Activated CD8-positive, alpha-beta memory T cell treated with anti-CD3 and anti-CD28 coated beads, Interleukin-2, amount 10 ng/mL, durations not matched to agents 7 days and 5 days (primary cell): ENCODE measurements at regions of chr22 and their contacts with region 1.

Region 1: DNA sequence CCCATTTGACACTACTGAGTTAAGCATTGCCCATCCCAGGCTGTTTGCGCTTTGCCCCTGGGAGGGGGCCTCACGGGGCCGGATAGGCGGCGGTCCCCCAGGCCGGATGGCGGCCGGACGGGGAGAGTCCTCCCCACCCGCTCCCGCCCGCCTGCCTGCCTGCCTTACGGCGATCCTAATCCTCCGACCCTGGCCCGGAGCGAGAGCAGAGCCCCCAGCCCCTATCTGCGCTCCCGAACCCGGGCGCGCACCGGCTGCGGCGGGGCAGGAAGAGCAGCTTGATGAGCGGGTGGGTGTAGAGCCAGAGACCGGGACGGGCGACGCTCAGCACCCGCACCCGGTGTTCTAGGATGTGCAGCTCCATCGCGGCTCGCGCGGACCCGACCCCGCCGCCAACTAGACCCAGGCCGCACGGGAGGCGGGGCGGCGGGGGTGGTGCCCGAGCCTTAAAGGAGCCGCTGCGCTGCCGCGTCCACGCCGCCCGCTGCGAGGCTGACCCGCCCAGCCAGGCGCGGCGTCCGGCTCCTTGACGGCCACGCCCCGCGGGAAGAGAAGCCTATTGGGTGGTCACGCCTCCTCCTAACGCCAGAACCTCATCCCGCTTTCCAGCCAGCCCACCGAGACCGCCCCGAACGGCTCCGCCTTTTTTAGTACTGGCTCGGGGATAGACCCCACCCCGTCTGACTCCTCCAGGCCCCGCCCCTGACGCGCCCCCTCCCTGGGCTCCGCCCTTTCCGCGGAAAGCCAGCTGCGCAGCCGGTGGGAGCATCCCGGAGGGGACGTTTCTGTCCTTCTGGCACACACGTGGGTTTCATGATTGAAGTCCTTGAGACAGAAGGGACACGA is at the start of gene CASTOR1:
- DNase-seq: peak; percentile 96
- ATAC-seq: peak; percentile 86
- H3K4me3 Mint-ChIP-seq: peak within 1 kb of the TSS; percentile 74
- H3K27ac Mint-ChIP-seq: peak within 1 kb of the TSS; percentile 83
- H3K4me1 Mint-ChIP-seq: peaks cover 51% of the 10 kb centered on the region
- H3K27me3 Mint-ChIP-seq: no peaks in the 10 kb centered on the region
- total RNA-seq, gene CASTOR1: 8.7 to 10.2 TPM

Region 2: DNA sequence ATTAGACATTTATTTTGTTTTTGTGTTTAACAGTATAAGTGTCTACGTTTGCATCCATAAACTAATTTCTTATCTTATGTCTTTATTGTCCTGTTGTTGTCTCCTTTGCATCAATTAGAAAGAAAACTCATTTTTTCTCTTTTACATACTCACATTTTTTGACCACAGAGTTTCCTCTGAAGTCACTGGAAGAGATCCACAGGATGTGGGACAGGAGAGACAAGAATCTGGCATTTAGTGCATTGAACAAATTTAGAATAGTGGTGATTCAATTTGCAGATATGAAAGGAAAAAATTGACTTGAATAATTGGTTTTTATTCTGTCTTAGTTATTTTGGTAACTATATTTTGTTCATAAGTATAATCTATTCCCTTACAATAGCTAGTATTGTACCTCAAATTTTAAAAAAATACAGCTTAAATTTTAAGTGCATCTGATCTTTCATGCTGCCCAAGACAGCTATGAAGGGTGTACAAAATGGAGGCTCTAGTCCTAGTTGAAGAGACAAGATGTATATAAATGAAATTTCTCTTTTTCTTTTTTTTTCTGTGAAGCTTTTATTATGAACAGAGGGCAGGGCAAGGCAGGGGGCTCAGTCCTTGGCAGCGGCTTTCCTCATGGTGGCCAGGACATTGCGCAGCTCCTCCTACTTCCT is 184.7 kb before region 1 on chr22:
- CTCF ChIA-PET with region 1: interaction called, 119 read pairs
- DNase-seq: peak; percentile 49
- ATAC-seq: peak; percentile 80
- H3K4me3 Mint-ChIP-seq: peak overlapping the region; percentile 24
- H3K27ac Mint-ChIP-seq: peak overlapping the region; percentile 78
- H3K4me1 Mint-ChIP-seq: peaks cover 55% of the 10 kb centered on the region
- H3K27me3 Mint-ChIP-seq: peaks cover 2% of the 10 kb centered on the region

Region 3: GRCh38 chr22:30277547-30278344 is 11.6 kb before region 1 on chr22:
- CTCF ChIA-PET with region 1: interaction called, 11 read pairs
- DNase-seq: no peak
- ATAC-seq: no peak
- H3K4me3 Mint-ChIP-seq: no peak overlapping the region
- H3K27ac Mint-ChIP-seq: no peak overlapping the region
- H3K4me1 Mint-ChIP-seq: peaks cover 70% of the 10 kb centered on the region
- H3K27me3 Mint-ChIP-seq: no peaks in the 10 kb centered on the region

Region 4: DNA sequence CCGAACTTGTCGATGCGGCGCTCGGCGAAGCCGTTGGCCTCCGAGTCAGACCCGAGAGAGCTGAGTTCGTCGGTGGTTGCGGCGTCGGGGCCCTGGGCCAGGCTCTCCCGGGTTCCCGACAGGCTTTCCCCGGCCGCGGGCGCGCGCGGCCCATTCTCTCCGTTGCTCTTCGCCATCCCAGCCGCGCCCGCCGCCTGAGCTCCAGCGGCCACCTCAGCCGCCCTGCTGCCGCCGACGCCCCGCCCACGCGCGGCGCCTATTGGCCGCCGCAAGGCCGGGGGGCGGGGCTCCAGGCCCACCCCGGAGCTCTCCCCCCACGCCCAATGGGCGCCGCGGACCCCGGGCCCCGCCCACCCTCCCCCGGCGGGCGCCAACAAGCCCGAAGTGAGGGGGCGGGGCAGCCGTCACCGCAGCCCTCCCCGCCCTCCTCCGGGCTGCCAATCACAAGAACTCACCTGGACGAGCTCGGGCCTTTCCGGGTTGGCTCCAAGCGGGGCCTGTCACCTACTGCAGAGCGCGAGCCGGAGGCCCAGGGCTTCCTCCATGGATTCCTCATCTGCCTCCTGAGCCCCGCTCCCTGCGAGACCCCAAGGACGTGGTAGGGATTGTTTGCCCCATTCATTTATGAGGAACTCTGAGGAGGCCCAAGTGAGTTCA is 37.5 kb after region 1 on chr22 and contains the start of gene TBC1D10A:
- CTCF ChIA-PET with region 1: interaction called, 81 read pairs
- DNase-seq: peak; percentile 95
- ATAC-seq: peak; percentile 90
- H3K4me3 Mint-ChIP-seq: peak within 1 kb of the TSS; percentile 88
- H3K27ac Mint-ChIP-seq: peak within 1 kb of the TSS; percentile 80
- H3K4me1 Mint-ChIP-seq: peaks cover 42% of the 10 kb centered on the region
- H3K27me3 Mint-ChIP-seq: no peaks in the 10 kb centered on the region
- total RNA-seq, gene TBC1D10A: 32.2 to 48.1 TPM

Region 5: GRCh38 chr22:30373331-30374325 is 84.3 kb after region 1 on chr22:
- CTCF ChIA-PET with region 1: interaction called, 12 read pairs
- DNase-seq: no peak
- ATAC-seq: no peak
- H3K4me3 Mint-ChIP-seq: no peak overlapping the region
- H3K27ac Mint-ChIP-seq: no peak overlapping the region
- H3K4me1 Mint-ChIP-seq: no peaks in the 10 kb centered on the region
- H3K27me3 Mint-ChIP-seq: no peaks in the 10 kb centered on the region

Region 6: GRCh38 chr22:30423982-30424963 is 134.9 kb after region 1 on chr22:
- CTCF ChIA-PET with region 1: interaction called, 64 read pairs
- DNase-seq: peak; percentile 100
- ATAC-seq: peak; percentile 91
- H3K4me3 Mint-ChIP-seq: peak overlapping the region; percentile 96
- H3K27ac Mint-ChIP-seq: peak overlapping the region; percentile 96
- H3K4me1 Mint-ChIP-seq: peaks cover 54% of the 10 kb centered on the region
- H3K27me3 Mint-ChIP-seq: no peaks in the 10 kb centered on the region